ENCODE measurements at regions of chr9 and their contacts with region 1.

Region 1: GRCh38 chr9:124617471-124618141 is 110.4 kb upstream of the NR5A1 start:
- DNase-seq: peak; percentile 85
- H3K4me3 Mint-ChIP-seq: no peak overlapping the region
- H3K27ac Mint-ChIP-seq: no peak overlapping the region
- H3K4me1 Mint-ChIP-seq: peaks cover 13% of the 10 kb centered on the region
- H3K27me3 Mint-ChIP-seq: no peaks in the 10 kb centered on the region
- CTCF ChIP-seq: peak; percentile 88

Region 2: DNA sequence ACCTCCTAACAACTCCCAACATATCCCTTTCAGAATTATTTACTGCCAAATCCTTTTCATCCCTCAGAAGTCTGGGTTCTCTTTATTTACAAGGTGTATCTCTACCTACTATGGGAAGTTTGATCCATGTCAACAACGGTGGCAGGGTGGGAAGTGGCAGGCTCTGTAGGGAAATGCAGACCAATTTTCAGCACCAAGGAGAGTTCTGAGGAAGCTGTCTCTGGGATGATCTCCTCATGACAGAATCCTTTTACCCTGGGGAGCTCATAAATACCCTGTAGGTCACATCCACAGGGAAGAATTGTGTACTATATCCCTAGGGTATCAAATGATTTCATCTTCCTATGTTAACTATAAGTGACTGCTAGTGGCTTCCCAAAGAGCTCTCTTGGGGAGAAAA is 467.6 kb before region 1 on chr9:
- CTCF ChIA-PET with region 1: no interaction called
- POLR2A ChIA-PET with region 1: no interaction called
- intact Hi-C with region 1: no loop called
- DNase-seq: peak; percentile 34
- H3K4me3 Mint-ChIP-seq: no peak overlapping the region
- H3K27ac Mint-ChIP-seq: no peak overlapping the region
- H3K4me1 Mint-ChIP-seq: no peaks in the 10 kb centered on the region
- H3K27me3 Mint-ChIP-seq: peaks cover 62% of the 10 kb centered on the region
- CTCF ChIP-seq: no peak

Region 3: DNA sequence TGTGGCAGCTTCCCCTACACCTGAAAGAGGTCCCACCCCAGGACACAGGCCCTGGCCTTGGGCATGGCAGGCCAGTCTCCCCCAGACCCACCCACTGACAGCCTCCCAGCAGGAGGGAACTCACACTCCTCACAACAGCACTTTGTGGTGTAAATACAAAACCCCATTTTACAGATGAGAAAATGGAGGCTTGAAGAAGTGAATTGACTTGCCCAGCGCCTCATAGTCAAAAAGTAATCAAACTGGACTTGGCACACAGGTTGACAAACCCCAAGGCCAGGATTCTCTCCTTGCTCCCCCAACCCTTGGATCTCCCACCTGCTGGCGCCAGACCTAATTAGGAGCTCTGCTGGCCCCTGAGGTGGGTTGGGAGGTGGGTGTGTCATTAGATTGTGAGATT is 389.1 kb before region 1 on chr9:
- CTCF ChIA-PET with region 1: no interaction called
- POLR2A ChIA-PET with region 1: no interaction called
- intact Hi-C with region 1: no loop called
- DNase-seq: no peak
- H3K4me3 Mint-ChIP-seq: no peak overlapping the region
- H3K27ac Mint-ChIP-seq: no peak overlapping the region
- H3K4me1 Mint-ChIP-seq: no peaks in the 10 kb centered on the region
- H3K27me3 Mint-ChIP-seq: peaks cover 29% of the 10 kb centered on the region
- CTCF ChIP-seq: no peak

Region 4: GRCh38 chr9:124602204-124602603 is 15.4 kb before region 1 on chr9:
- CTCF ChIA-PET with region 1: interaction called, 60 read pairs
- POLR2A ChIA-PET with region 1: interaction called, 5 read pairs
- intact Hi-C with region 1: no loop called
- DNase-seq: peak; percentile 66
- H3K4me3 Mint-ChIP-seq: no peak overlapping the region
- H3K27ac Mint-ChIP-seq: peak overlapping the region; percentile 24
- H3K4me1 Mint-ChIP-seq: peaks cover 15% of the 10 kb centered on the region
- H3K27me3 Mint-ChIP-seq: no peaks in the 10 kb centered on the region
- CTCF ChIP-seq: no peak

Region 5: DNA sequence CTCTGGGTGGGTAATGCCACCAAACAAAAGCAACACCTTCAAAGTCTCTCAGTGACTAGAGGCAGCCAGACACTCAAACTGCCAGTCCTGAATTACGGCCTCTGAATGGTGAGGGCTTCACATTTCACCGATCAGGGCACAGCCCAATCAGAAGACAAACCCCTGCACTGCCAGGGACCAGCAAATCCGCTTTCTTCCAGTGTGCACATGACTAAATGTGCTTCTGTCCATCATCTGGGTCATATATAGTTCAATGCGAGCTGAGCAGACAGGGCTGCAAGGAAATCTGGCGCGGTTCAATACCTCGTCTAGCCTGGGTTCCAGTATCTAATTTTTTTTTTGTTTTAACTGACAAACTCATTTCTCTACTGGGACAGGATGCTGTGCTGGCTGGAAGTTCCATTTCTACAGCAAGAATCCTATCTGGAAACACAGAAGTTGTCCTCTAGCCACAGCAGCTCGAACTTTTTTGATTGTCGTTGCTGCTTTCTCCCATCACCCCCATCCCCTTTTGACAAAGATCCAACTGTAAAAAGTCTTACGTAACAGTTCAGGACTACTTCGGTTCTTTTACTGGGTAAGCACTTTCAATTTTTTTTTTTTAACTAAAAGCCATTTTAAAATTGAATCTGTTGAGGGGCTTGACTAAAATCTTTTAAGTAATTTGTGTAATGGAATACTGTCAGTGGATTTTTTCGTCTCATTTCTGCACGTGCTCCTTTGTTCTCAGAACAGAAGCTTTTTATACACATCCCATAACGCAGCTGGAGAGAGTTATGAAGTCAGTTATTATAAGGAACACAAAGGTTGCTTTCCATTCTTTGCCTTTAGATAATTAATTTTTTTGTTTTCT is 40.8 kb after region 1 on chr9:
- CTCF ChIA-PET with region 1: interaction called, 44 read pairs
- POLR2A ChIA-PET with region 1: interaction called, 11 read pairs
- intact Hi-C with region 1: loop called (anchors 1 kb)
- DNase-seq: peak; percentile 98
- H3K4me3 Mint-ChIP-seq: peak overlapping the region; percentile 98
- H3K27ac Mint-ChIP-seq: peak overlapping the region; percentile 96
- H3K4me1 Mint-ChIP-seq: peaks cover 20% of the 10 kb centered on the region
- H3K27me3 Mint-ChIP-seq: no peaks in the 10 kb centered on the region
- CTCF ChIP-seq: no peak

Region 6: DNA sequence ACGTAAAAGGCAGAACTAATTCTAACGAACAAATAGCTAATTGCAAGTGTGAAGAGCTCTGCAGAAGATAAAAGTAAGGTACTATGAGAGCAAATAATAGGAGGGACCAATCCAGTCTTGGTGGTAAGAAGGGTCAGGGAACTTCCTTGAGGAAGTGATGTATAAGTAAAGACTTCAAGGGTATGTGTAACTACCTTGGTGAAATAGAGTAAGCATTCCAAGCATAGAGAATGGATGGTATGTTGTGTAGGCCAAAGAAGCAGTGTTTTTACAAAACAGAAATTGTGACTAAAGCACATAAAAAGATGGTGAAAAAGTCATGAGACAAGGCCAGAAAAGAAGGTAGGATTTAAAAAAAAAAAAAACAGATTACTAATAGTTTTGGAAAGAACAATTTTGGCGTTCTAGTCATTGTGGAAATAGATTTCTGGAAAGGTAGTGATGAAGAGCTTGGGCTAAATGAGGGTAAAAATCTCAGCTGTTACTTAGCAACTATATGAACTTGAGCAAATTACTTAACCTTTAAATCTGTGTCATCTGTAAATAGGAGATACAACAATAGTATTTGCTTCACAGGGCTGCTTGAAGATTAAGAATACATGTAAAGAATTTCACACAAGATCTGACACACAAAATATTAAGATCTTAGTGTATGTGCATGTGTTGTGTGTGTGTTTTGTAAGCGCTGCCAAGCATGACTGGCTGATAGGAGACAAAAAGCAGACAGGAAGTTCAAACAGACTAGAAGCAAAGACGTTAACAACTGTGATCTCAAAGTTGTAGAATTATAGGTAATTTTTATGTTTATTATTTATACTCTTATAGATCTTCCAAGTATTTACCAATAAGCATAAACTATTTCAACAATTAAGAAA is 80.0 kb after region 1 on chr9:
- CTCF ChIA-PET with region 1: interaction called, 12 read pairs
- POLR2A ChIA-PET with region 1: no interaction called
- intact Hi-C with region 1: no loop called
- DNase-seq: no peak
- H3K4me3 Mint-ChIP-seq: peak overlapping the region; percentile 21
- H3K27ac Mint-ChIP-seq: no peak overlapping the region
- H3K4me1 Mint-ChIP-seq: peaks cover 30% of the 10 kb centered on the region
- H3K27me3 Mint-ChIP-seq: no peaks in the 10 kb centered on the region
- CTCF ChIP-seq: no peak

Region 7: GRCh38 chr9:124735121-124735520 is 117.5 kb after region 1 on chr9:
- CTCF ChIA-PET with region 1: interaction called, 11 read pairs
- POLR2A ChIA-PET with region 1: interaction called, 3 read pairs
- intact Hi-C with region 1: no loop called
- DNase-seq: peak; percentile 48
- H3K4me3 Mint-ChIP-seq: peak overlapping the region; percentile 21
- H3K27ac Mint-ChIP-seq: peak overlapping the region; percentile 75
- H3K4me1 Mint-ChIP-seq: peaks cover 17% of the 10 kb centered on the region
- H3K27me3 Mint-ChIP-seq: no peaks in the 10 kb centered on the region
- CTCF ChIP-seq: no peak

Region 8: DNA sequence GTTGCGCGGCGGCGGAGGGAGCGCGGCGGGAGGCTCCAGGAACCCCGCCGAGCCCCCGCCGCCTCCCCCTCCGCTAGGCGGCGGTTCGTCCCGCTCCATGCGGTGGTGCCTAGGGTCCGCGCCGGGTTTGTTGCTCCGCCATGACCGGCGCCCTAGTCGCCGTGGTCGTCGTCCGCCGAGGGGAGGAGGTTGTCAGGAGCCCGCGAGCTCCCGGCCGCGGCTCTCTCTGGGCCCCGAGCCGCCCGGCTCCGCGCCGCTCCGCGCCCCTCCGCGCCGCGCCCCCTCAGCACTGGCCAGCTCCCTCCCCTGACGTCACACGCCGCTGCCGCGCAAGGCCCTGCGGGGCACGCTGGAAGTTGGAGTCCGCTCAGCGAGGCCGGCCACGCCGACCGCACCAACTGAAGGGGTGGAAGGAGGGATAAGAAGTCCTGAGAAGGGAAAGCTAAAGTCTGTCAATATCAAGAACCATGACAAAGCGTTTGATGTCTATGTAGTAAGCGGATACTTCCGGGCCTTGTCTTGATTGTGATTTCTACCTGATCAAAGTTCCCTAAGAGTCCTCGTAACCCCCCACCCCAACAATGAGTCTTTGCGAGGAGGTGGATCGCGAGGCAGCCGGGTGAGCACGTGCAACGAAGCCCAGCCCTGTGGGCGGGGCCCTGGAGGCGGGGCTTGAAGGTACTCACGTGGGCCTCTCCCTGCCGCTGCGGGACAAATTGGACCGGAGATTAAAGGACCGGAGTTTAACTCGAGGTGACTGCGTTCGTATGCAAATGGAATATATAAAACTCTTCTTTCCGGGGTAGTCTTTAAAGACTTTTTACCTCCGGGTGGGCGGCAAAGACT is 153.6 kb after region 1 on chr9 and contains the start of gene NR6A1:
- CTCF ChIA-PET with region 1: interaction called, 40 read pairs
- POLR2A ChIA-PET with region 1: no interaction called
- intact Hi-C with region 1: no loop called
- DNase-seq: peak; percentile 97
- H3K4me3 Mint-ChIP-seq: peak within 1 kb of the TSS; percentile 99
- H3K27ac Mint-ChIP-seq: peak within 1 kb of the TSS; percentile 99
- H3K4me1 Mint-ChIP-seq: peaks cover 25% of the 10 kb centered on the region
- H3K27me3 Mint-ChIP-seq: peaks cover 6% of the 10 kb centered on the region
- CTCF ChIP-seq: no peak
- total RNA-seq, gene NR6A1: 0.91 and 2.0 TPM in 2 replicates

Measured in MCF 10A (cell line).